OCI-LY7 (cell line): ENCODE measurements at regions of chr9 and their contacts with region 1.

Region 1: DNA sequence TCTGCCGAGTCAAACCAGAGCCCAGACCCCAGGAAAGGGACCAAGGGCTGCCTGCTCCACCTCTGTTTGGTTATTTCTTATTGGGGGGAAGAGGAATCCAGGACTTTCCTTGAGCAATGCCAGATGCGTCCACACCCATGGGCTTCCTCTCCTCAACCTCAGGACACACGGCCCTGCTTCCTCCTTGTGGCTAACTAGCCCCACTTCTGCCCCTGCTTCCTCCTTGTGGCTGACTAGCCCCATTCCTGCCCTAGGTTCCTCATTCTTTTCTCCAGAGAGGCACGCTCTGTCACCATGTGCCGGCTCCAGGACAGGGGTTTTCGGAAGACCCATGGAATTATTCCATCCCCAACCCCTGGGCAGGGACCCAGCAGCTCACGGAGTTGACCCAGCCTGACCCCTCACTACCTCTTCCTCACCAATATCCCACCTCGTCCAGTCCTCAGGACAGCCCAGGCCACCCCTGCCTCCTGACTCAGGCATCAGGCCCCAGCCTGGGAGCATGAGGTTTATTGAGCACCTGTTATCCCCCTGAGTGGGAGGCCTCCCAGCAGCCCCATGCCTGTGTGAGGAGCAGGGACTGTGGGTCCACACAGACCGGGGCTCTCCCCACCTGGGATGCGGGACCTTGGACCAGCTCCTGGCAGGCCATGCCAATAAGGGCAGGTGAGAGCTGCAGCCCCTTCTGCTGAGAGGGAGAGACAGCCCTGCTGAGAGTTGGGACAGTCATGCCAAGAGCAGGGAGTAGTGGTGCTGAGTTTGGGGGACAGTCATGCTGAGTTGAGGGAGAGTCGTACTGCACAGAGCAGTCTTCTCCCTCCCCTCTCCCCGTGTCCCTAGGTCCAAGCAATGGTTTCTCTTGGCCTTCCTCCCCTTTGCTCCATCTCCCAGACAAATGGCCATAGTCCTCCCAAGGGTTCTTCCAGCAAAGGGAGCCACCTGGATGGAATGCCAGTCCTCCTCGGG is 11.8 kb upstream of the FCN1 start:
- DNase-seq: peak; percentile 68
- H3K4me3 ChIP-seq: peak overlapping the region; percentile 31
- H3K27ac ChIP-seq: peak overlapping the region; percentile 97
- H3K4me1 ChIP-seq: peaks cover 63% of the 10 kb centered on the region
- CTCF ChIP-seq: no peak

Region 2: GRCh38 chr9:134768709-134769351 is 160.6 kb before region 1 on chr9:
- CTCF ChIA-PET with region 1: no interaction called
- POLR2A ChIA-PET with region 1: no interaction called
- intact Hi-C with region 1: loop called (anchors 5 kb)
- DNase-seq: no peak
- H3K4me3 ChIP-seq: peak overlapping the region; percentile 62
- H3K27ac ChIP-seq: no peak overlapping the region
- H3K4me1 ChIP-seq: peaks cover 64% of the 10 kb centered on the region
- CTCF ChIP-seq: no peak

Region 3: DNA sequence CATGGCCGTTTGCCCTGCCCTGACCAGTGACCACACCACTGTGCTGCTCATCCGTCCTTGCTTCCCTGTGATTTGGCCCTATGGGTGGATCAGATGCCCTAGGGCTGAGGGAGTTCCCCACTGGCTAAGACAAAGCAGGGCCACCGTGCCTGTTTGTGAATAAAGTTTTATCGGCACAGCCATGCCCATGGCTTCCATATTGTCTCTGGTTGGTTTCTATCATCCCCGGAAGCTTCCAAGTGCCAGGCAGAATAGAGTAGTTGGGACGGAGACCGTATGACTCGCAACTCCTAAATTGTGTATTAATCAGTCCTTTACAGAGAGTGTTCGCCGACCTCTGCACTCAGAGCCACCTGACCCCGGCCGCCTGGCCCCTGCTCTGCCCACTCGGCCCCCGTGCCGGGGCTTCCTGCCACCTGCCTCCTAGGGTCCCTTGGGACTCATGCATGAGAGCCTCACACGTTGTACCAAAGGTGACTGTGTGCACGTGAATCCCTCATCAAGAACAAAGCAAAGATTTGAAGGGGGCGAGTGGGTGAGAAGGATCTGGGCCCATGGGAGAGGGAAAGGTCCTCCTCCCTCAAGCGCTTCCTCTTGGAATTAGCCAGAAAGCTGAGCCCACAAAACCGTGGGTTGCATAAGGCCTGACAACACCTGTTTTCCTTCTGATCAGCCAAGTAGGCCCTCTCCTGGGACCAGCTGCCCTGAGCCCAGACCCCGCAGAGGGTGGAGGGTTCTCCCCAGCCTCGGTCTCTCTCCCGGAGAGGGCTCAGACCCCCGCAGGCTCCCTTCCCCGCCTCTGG is 60.5 kb before region 1 on chr9:
- CTCF ChIA-PET with region 1: no interaction called
- POLR2A ChIA-PET with region 1: interaction called, 5 read pairs
- intact Hi-C with region 1: loop called (anchors 2 kb)
- DNase-seq: peak; percentile 97
- H3K4me3 ChIP-seq: peak overlapping the region; percentile 17
- H3K27ac ChIP-seq: peak overlapping the region; percentile 83
- H3K4me1 ChIP-seq: peaks cover 37% of the 10 kb centered on the region
- CTCF ChIP-seq: no peak

Region 4: GRCh38 chr9:134993996-134994720 is 64.7 kb after region 1 on chr9:
- CTCF ChIA-PET with region 1: no interaction called
- POLR2A ChIA-PET with region 1: no interaction called
- intact Hi-C with region 1: no loop called
- DNase-seq: no peak
- H3K4me3 ChIP-seq: no peak overlapping the region
- H3K27ac ChIP-seq: no peak overlapping the region
- H3K4me1 ChIP-seq: no peaks in the 10 kb centered on the region
- CTCF ChIP-seq: no peak